ENCODE measurements at regions of chr12 and their contacts with region 1.

Region 1: GRCh38 chr12:81439349-81439748 is 319.8 kb downstream of the PPFIA2 start:
- DNase-seq: no peak

Region 2: GRCh38 chr12:81360916-81361315 is 78.4 kb before region 1 on chr12:
- intact Hi-C with region 1: loop called (anchors 10 kb)
- DNase-seq: peak in 1 of 42 donors; percentile 25

Region 3: GRCh38 chr12:81546811-81547210 is 107.5 kb after region 1 on chr12:
- intact Hi-C with region 1: no loop called
- DNase-seq: no peak

Measured in head of caudate nucleus (tissue), 42 donors.